WTC11 (cell line): ENCODE measurements at regions of chr1 and their contacts with region 1.

Region 1: GRCh38 chr1:48870596-48870995 is 93.9 kb upstream of the BEND5 start:
- DNase-seq: peak; percentile 26
- ATAC-seq: peak; percentile 50
- H3K4me3 Mint-ChIP-seq: no peak overlapping the region
- H3K27ac Mint-ChIP-seq: no peak overlapping the region
- H3K4me1 Mint-ChIP-seq: peaks cover 33% of the 10 kb centered on the region
- H3K27me3 Mint-ChIP-seq: no peaks in the 10 kb centered on the region
- CTCF ChIP-seq: peak; percentile 38; the same call in 1 of the 2 replicates

Region 2: GRCh38 chr1:48889082-48889481 is 18.5 kb after region 1 on chr1:
- CTCF ChIA-PET with region 1: interaction called, 13 read pairs
- POLR2A ChIA-PET with region 1: interaction called, 3 read pairs
- DNase-seq: no peak
- ATAC-seq: no peak
- H3K4me3 Mint-ChIP-seq: no peak overlapping the region
- H3K27ac Mint-ChIP-seq: no peak overlapping the region
- H3K4me1 Mint-ChIP-seq: peaks cover 46% of the 10 kb centered on the region
- H3K27me3 Mint-ChIP-seq: no peaks in the 10 kb centered on the region; the same call in 1 of the 2 replicates
- CTCF ChIP-seq: no peak